HepG2 (cell line): ENCODE measurements at regions of chr11 and their contacts with region 1.

Region 1: DNA sequence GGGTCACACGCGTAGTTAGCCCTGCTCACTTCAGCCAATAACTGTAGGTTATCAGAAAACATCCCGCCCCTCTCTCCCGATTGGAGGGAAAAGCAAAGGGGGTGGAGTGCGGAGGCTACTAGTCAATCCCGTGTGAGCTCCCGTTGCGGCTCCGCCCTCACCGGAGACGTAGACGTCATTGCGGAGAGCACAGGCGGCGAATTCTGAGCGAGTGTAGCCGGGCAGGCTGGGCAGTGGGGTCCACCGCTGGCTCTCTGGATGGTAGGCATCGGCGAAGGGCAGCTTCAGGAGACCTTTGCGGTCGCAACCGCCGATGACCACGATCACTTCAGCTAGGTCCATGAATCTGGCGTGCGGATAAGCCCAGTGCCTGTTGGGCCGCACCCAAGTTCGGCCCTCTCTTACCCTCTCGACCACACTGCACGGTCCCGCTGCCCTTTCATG is 4.7 kb downstream of the KLHL35 start:
- DNase-seq: peak; percentile 85
- ATAC-seq: peak; percentile 81
- H3K4me3 ChIP-seq: peak overlapping the region; percentile 23 to 66 (median 59); a peak in 5 of 6 replicates
- H3K27ac ChIP-seq: no peak overlapping the region
- H3K4me1 ChIP-seq: peaks cover 33% of the 10 kb centered on the region
- H3K27me3 ChIP-seq: peaks cover 3 to 25% of the 10 kb centered on the region in 2 experiments; a peak in 4 of 5 replicates
- CTCF ChIP-seq: no peak
- EP300 ChIP-seq: no peak
- POLR2A ChIP-seq: peak in 1 of 2 experiments; percentile 63; a peak in 2 of 4 replicates
- RAD21 ChIP-seq: no peak

Region 2: DNA sequence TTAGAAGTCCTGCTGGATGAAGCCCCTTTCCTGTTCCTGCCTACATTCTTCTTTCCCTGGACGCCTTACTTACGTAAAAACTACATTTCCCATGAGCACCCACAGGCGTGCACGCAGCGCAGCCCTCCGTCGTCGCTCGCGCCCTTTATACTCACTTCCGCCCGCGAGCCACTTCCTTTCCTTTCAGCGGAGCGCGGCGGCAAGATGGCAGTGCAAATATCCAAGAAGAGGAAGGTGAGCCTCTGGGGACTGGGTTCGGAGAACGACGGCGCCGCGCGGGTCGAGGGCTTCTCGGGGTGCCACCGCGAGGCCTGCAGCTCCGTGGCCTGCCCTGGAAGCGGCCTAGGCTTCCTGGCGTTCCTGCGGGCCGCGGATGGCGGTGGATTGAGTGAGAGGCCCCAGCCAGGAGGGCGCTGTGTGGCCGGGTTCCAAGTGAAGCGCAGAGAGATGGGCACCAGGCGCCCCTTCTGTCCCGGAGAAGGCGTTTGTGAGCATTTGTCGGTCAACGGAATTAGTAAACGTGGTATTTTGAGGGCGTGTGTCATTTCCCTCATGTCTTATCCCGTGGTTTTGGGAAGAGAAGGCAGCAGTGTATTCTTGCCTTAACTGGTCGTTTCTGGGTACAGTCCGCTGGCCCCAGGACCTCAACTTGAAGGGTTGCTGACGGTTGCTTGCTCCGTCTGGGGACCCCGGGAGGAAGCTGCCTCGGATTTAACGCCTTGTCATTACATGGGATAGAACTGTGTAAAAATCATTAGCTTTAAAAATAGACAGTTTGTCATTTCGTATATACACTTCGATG is 28.8 kb before region 1 on chr11 and contains the start of gene RPS3:
- CTCF ChIA-PET with region 1: no interaction called
- POLR2A ChIA-PET with region 1: interaction called, 10 read pairs
- in situ Hi-C with region 1: no loop called
- intact Hi-C with region 1: no loop called
- DNase-seq: peak; percentile 88
- ATAC-seq: peak; percentile 91
- H3K4me3 ChIP-seq: peak within 1 kb of the TSS; percentile 91 to 96 (median 96)
- H3K27ac ChIP-seq: peak within 1 kb of the TSS; percentile 93
- H3K4me1 ChIP-seq: peaks cover 40% of the 10 kb centered on the region
- H3K27me3 ChIP-seq: peaks cover 0 to 6% of the 10 kb centered on the region in 2 experiments; a peak in 1 of 5 replicates
- CTCF ChIP-seq: peak; percentile 65
- EP300 ChIP-seq: 0 out of 4 replicates have a peak, but pooled peaks of 1 of the 2 experiments have one; percentile 5
- POLR2A ChIP-seq: peak; percentile 98 to 99
- RAD21 ChIP-seq: peak; percentile 45
- total RNA-seq, gene RPS3: 2,143 and 2,814 TPM in 2 replicates